Thyroid gland (tissue), 4 donors: ENCODE measurements at regions of chr15 and their contacts with region 1.

Region 1: GRCh38 chr15:46589088-46589487 is 954.3 kb downstream of the SQOR start:
- DNase-seq: no peak
- H3K4me3 ChIP-seq: no peak overlapping the region
- H3K27ac ChIP-seq: no peak overlapping the region
- H3K4me1 ChIP-seq: no peaks in the 10 kb centered on the region
- H3K27me3 ChIP-seq: no peaks in the 10 kb centered on the region
- CTCF ChIP-seq: no peak
- POLR2A ChIP-seq: no peak

Region 2: GRCh38 chr15:46496491-46497115 is 92.5 kb before region 1 on chr15:
- intact Hi-C with region 1: no loop called
- DNase-seq: no peak
- H3K4me3 ChIP-seq: no peak overlapping the region
- H3K27ac ChIP-seq: no peak overlapping the region
- H3K4me1 ChIP-seq: no peaks in the 10 kb centered on the region
- H3K27me3 ChIP-seq: no peaks in the 10 kb centered on the region
- CTCF ChIP-seq: no peak
- POLR2A ChIP-seq: no peak

Region 3: DNA sequence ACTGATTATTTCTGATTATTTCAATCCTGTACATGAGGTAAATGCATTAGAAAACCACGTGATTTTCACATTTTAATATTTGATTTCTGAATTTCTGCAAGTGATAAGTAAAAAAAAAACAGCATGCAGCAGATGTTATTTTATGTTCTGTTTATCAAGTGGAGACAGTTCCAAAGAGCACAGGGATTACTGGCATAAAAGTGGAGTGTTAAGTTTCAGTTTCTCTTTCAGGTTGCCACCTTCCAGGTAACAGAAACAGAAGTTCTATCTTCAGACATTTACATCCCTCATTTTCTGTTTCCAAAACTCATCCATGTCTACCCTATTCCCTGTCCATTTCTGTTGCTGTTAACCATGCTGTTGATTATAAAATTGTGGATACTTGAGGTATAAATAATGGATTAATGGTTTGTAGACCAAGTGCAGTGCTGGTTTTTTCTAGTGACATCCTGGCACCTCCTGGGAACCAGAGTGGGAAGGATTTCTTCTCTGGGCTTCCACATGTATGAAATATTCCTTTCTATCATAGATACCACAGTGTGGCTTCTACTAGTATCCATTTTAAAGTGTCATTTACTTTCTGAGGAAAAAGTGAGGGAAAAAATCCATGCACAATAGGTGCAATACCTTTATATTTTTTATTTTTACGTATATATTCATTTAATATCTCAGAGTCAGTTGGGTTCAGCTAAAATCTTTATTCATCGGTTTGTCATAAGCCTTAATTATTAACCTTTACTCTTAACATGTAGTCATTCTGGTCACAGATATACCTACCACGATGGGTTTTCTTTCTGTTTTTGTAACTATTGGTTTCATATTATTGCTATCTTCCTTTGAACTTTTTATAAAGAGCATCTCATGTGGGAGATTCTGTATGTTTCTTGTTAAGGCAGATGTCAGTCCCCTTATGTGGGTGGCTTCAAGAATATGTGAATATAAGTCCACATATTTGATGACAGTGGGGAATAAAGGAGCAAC is 55.7 kb after region 1 on chr15:
- intact Hi-C with region 1: loop called (anchors 10 kb)
- DNase-seq: no peak
- H3K4me3 ChIP-seq: no peak overlapping the region
- H3K27ac ChIP-seq: no peak overlapping the region
- H3K4me1 ChIP-seq: no peaks in the 10 kb centered on the region
- H3K27me3 ChIP-seq: no peaks in the 10 kb centered on the region
- CTCF ChIP-seq: no peak
- POLR2A ChIP-seq: no peak

Region 4: GRCh38 chr15:46676233-46677206 is 87.4 kb after region 1 on chr15:
- intact Hi-C with region 1: no loop called
- DNase-seq: no peak
- H3K4me3 ChIP-seq: no peak overlapping the region
- H3K27ac ChIP-seq: no peak overlapping the region
- H3K4me1 ChIP-seq: no peaks in the 10 kb centered on the region
- H3K27me3 ChIP-seq: no peaks in the 10 kb centered on the region
- CTCF ChIP-seq: no peak
- POLR2A ChIP-seq: no peak